Upper lobe of right lung (tissue), 1 donor: ENCODE measurements at regions of chr4 and their contacts with region 1.

Region 1: GRCh38 chr4:125741825-125742452 is 427.2 kb downstream of the FAT4 start:
- DNase-seq: no peak
- ATAC-seq: peak; percentile 71
- H3K4me3 ChIP-seq: no peak overlapping the region
- H3K27ac ChIP-seq: no peak overlapping the region
- H3K4me1 ChIP-seq: no peaks in the 10 kb centered on the region
- H3K27me3 ChIP-seq: no peaks in the 10 kb centered on the region
- CTCF ChIP-seq: peak; percentile 64

Region 2: GRCh38 chr4:125314676-125315575 is 427.0 kb before region 1 on chr4 and contains the start of gene FAT4:
- intact Hi-C with region 1: loop called (anchors 10 kb)
- DNase-seq: peak; percentile 95
- ATAC-seq: peak; percentile 94
- H3K4me3 ChIP-seq: peak within 1 kb of the TSS; percentile 75
- H3K27ac ChIP-seq: peak within 1 kb of the TSS; percentile 85
- H3K4me1 ChIP-seq: peaks cover 17% of the 10 kb centered on the region
- H3K27me3 ChIP-seq: peaks cover 17% of the 10 kb centered on the region
- CTCF ChIP-seq: no peak
- total RNA-seq, gene FAT4: 17.9 TPM

Region 3: DNA sequence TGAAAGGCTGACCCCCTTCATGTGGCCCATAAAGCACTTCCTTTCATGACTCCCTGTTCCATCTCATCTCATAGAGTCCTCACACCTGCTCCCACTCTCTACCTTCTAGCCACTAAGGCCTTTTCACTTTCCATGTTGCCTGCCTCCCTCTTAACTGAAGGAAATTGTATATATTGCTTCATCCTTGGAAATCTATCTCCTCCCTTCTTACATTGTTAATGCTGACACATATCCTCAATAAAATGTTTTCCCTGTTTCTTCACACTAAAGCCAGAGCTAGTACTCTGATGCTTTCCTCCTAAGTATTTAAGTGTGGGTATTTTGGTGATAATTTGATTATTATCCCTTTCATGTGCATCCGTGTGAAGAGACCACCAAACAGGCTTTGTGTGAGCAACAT is 402.9 kb after region 1 on chr4:
- intact Hi-C with region 1: no loop called
- DNase-seq: no peak
- ATAC-seq: no peak
- H3K4me3 ChIP-seq: no peak overlapping the region
- H3K27ac ChIP-seq: no peak overlapping the region
- H3K4me1 ChIP-seq: no peaks in the 10 kb centered on the region
- H3K27me3 ChIP-seq: no peaks in the 10 kb centered on the region
- CTCF ChIP-seq: no peak